RWPE1 (cell line): ENCODE measurements at regions of chr16 and their contacts with region 1.

Region 1: DNA sequence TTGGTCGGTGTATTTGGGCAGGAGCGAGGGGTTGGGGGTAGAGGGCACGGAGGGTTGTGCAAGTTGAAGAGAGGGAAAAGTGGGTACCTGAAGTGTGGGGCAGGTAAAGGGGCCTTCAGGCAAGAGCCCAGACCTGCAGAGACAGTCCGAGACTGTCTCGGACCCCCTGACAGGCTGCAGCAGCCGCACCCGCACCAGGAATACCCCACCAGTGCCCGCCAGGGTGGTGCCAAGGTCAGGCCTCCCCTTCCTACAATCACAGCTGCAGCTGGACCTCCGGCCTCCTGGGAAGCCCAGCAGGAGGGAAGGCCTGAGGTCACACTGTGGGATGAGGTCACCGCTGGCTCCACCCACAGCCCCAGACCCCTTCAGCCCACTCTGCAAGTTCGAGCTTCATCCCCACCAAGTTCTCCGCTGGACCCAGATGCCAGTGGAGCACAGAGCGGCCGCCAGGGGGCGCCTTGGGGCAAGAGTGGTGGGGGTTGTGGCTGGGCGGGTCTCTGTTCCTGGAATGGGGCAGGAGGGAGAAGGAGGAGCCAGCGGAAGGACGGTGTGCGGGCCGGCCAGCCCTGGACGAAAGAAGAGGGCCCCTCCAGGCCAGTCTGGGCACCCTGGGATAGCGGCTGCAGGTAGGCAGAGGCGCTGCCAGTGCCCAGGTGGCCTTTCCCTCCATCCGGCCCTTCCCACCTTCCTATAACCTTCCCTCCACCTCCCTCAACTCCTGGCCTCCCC is at the start of gene HSD3B7:
- DNase-seq: peak; percentile 93
- H3K27ac ChIP-seq: peak within 1 kb of the TSS; percentile 71
- CTCF ChIP-seq: peak; percentile 94

Region 2: GRCh38 chr16:30997000-30997886 is 12.4 kb after region 1 on chr16:
- CTCF ChIA-PET with region 1: interaction called, 14 read pairs
- POLR2A ChIA-PET with region 1: interaction called, 3 read pairs
- DNase-seq: peak; percentile 92
- H3K27ac ChIP-seq: peak overlapping the region; percentile 94
- CTCF ChIP-seq: no peak

Region 3: GRCh38 chr16:31002250-31002700 is 17.4 kb after region 1 on chr16:
- CTCF ChIA-PET with region 1: interaction called, 14 read pairs
- POLR2A ChIA-PET with region 1: no interaction called
- DNase-seq: no peak
- H3K27ac ChIP-seq: peak overlapping the region; percentile 14; the same call in 1 of the 2 replicates
- CTCF ChIP-seq: no peak

Region 4: GRCh38 chr16:31073968-31074813 is 89.4 kb after region 1 on chr16 and contains the starts of genes ZNF646 and ZNF668:
- CTCF ChIA-PET with region 1: interaction called, 10 read pairs
- POLR2A ChIA-PET with region 1: no interaction called
- DNase-seq: peak; percentile 96
- H3K27ac ChIP-seq: peak within 1 kb of the TSS; percentile 93
- CTCF ChIP-seq: no peak

Region 5: DNA sequence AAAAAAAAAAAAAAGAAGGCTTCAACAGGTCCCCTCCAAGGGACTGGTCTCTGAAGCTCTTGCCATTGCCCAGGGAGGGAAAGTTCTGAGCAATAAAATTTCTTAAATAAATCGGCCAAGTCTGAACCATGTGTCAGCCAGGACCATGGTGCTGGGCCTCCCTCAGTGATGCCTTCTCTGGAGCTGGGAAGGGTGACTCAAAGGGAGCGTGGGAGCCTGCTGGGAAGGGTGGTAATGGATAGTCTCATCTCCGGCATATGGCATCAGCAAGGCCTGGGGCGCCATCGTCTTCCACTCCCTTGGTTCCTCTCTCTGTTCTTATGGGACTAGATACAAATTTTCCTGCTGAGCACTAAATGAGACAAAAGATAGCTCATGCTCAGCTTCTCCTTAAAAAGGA is 107.5 kb after region 1 on chr16:
- CTCF ChIA-PET with region 1: interaction called, 11 read pairs
- POLR2A ChIA-PET with region 1: no interaction called
- DNase-seq: no peak
- H3K27ac ChIP-seq: peak overlapping the region; percentile 97
- CTCF ChIP-seq: no peak

Region 6: GRCh38 chr16:31142109-31143010 is 157.5 kb after region 1 on chr16:
- CTCF ChIA-PET with region 1: interaction called, 23 read pairs
- POLR2A ChIA-PET with region 1: no interaction called
- DNase-seq: peak; percentile 99
- H3K27ac ChIP-seq: peak overlapping the region; percentile 98
- CTCF ChIP-seq: peak; percentile 95